ENCODE measurements at regions of chr11 and their contacts with region 1.

Region 1: DNA sequence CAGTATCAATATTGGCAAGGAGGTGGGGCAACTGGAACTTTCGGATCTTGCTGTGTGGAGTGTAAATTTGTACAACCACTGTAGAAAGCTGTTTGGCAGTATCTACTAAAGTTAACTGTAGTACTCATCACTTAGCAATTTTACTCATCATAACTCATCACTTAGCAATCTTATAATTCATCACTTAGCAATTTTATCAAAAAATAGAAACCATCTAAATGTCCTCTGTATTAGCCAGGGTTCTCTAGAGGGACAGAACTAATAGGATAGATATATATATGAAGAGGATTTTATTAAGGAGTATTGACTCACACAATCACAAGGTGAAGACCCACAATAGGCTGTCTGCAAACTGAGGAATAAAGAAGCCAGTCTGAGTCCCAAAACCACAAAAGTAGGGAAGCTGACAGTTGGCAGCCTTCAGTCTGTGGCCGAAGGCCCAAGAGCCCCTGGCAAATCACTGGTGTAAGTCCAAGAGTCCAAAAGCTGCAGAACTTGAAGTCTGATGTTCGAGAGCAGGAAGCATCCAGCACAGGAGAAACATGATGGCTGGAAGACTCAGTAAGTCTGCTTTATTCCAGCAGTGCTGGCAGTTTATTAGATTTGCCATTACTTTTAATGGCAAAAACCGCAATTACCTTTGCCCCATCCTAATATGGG is 92.9 kb upstream of the USP47 start:
- DNase-seq: peak; percentile 54
- H3K4me3 ChIP-seq: no peak overlapping the region
- H3K27ac ChIP-seq: peak overlapping the region; percentile 57
- H3K4me1 ChIP-seq: peaks cover 23% of the 10 kb centered on the region
- H3K27me3 ChIP-seq: no peaks in the 10 kb centered on the region
- CTCF ChIP-seq: no peak

Region 2: GRCh38 chr11:11717064-11717725 is 31.6 kb before region 1 on chr11:
- CTCF ChIA-PET with region 1: no interaction called
- dilution Hi-C with region 1: no loop called
- in situ Hi-C with region 1: no loop called
- intact Hi-C with region 1: loop called (anchors 1 kb)
- DNase-seq: peak; percentile 96
- H3K4me3 ChIP-seq: no peak overlapping the region
- H3K27ac ChIP-seq: peak overlapping the region; percentile 71
- H3K4me1 ChIP-seq: no peaks in the 10 kb centered on the region
- H3K27me3 ChIP-seq: no peaks in the 10 kb centered on the region
- CTCF ChIP-seq: no peak